ENCODE measurements at regions of chr9 and their contacts with region 1.

Region 1: DNA sequence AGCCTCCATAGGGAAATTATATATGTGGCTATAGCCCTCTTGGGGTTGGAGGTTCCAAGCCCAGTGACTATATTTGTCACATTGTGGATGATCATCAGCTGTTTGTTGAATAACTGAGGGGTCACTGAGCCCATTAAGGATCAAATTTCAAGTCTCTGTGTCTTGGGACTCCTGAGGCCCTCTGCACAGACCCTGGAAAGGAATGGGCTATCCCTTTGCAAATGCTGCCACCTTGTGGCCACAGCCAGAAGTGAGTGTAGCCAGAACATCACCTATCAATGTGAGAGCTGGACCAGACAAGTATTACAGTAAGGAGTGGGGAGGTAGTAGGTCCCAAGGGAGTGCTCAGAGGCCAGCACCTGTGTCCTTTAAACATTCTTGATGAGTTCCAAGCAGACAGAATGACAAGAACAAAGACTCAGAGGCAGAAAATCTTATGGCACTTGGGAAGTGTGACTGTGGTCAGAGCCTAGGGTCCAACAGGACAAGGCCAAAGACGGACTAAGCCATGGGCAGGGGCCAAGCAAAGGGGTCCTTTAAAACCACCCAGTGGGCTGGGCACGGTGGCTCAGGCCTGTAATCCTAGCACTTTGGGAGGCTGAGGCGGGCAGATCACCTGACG is 8.2 kb downstream of the RPP25L start:
- DNase-seq: peak; percentile 68 to 88 (median 80)
- H3K4me3 ChIP-seq: no peak overlapping the region
- H3K27ac ChIP-seq: no peak overlapping the region
- H3K4me1 ChIP-seq: no peaks in the 10 kb centered on the region
- H3K27me3 ChIP-seq: peaks cover 0 to 14% (median 7%) of the 10 kb centered on the region in 5 experiments

Region 2: DNA sequence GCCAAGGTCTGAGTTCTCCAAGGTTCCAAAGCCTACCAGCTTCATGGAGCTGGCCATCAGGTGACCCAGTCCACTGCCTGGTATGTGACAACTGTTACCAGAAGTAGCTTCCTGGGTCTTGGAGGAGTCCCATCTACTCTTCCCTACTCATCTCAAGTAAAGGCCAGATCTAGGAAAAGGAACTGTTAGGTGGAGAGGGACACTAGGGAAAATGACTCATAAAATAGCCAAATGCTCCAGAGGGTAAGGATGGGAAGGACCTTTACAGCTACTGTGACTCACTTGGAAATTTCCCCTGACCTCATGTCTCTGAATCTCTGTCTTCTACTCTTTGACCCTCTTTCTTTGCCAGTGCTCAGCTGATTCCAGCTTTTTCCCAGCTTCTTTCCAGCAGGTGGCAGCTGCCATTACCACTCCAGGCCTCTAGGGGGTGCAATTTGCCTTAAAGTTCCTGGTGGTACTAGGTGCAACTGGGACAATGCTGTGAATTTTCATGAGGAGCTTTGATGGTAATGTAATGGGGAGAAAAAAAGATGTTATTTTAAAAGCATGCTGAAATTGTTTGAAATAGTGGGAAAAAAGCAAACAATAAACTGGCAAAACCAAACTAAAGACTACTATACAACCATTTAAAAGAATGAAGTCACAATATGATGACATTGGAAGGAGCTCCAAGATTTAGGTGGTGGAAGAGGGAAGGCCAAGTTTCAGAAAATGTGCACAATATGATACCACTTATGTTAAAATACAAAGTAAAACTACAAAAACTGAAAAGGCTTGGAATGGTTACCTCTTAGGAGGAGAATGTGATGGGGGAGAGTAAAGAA is 200.0 kb before region 1 on chr9:
- CTCF ChIA-PET with region 1: interaction called, 10 read pairs
- POLR2A ChIA-PET with region 1: interaction called, 3 read pairs
- DNase-seq: peak; percentile 25 to 61 (median 46)
- H3K4me3 ChIP-seq: no peak overlapping the region
- H3K27ac ChIP-seq: no peak overlapping the region
- H3K4me1 ChIP-seq: peaks cover 0 to 2% (median 0%) of the 10 kb centered on the region in 4 experiments
- H3K27me3 ChIP-seq: no peaks in the 10 kb centered on the region

Region 3: GRCh38 chr9:34591248-34591916 is 12.3 kb before region 1 on chr9:
- CTCF ChIA-PET with region 1: interaction called, 52 read pairs
- POLR2A ChIA-PET with region 1: no interaction called
- DNase-seq: peak; percentile 53 to 72 (median 69)
- H3K4me3 ChIP-seq: peak overlapping the region in 6 of 7 experiments; percentile 9 to 74 (median 60)
- H3K27ac ChIP-seq: no peak overlapping the region
- H3K4me1 ChIP-seq: peaks cover 0 to 47% (median 43%) of the 10 kb centered on the region in 4 experiments
- H3K27me3 ChIP-seq: peaks cover 11 to 92% (median 52%) of the 10 kb centered on the region in 5 experiments

Region 4: GRCh38 chr9:34651876-34652601 is 48.3 kb after region 1 on chr9 and contains the start of gene IL11RA:
- CTCF ChIA-PET with region 1: no interaction called
- POLR2A ChIA-PET with region 1: no interaction called
- DNase-seq: peak in 2 of 3 donors; percentile 61 to 66
- H3K4me3 ChIP-seq: peak within 1 kb of the TSS in 2 of 7 experiments; percentile 25 to 29
- H3K27ac ChIP-seq: no peak within 1 kb of the TSS
- H3K4me1 ChIP-seq: peaks cover 7 to 33% (median 31%) of the 10 kb centered on the region in 4 experiments
- H3K27me3 ChIP-seq: no peaks in the 10 kb centered on the region